ENCODE measurements at regions of chr16 and their contacts with region 1.

Region 1: GRCh38 chr16:85554112-85554813 is 58.9 kb upstream of the GSE1 start:
- DNase-seq: peak in 8 of 9 donors; percentile 28 to 78 (median 52)
- ATAC-seq: peak; percentile 76
- H3K4me3 ChIP-seq: peak overlapping the region; percentile 88
- H3K4me3 Mint-ChIP-seq: peak overlapping the region; percentile 86 to 98 (median 92)
- H3K27ac ChIP-seq: peak overlapping the region; percentile 83
- H3K27ac Mint-ChIP-seq: peak overlapping the region; percentile 72 to 97 (median 89)
- H3K4me1 ChIP-seq: peaks cover 13 to 27% of the 10 kb centered on the region in 2 donors
- H3K4me1 Mint-ChIP-seq: peaks cover 18 to 47% (median 28%) of the 10 kb centered on the region in 7 donors
- H3K27me3 ChIP-seq: no peaks in the 10 kb centered on the region
- H3K27me3 Mint-ChIP-seq: peaks cover 0 to 15% (median 0%) of the 10 kb centered on the region in 5 donors

Region 2: DNA sequence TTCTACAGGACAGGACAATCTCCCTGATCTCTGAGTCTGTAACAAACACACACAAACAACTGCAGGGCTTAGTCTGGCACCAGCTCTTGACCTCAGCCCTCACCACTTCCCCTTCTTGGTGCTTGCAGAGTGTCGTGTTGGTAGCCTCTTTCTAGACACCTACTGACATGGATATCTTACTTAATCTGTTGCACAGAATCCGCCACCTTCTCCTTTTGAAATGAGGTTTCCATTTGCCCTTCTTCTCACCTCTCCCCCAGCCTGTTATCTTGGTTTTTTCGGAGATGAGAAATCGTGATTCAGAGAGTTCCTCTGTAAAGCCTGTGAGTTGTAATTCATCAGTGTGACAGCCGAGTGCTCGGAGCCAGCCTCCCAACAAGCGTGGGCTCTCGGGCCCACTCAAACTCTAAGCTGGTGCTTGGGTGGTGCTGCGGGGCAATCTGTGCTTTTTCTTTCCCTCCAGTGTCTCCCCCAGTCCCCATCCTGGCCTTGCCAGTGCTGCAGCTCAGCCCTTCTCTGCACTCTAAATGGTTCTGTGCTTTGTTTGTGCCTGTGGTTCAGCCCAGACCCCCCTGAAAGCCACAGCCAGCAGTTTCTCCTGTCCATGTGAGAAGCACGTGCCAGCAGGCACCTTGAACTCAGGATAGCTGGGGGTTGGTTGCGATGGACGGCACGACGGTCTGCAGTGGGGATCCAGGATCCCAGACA is 498.6 kb before region 1 on chr16:
- CTCF ChIA-PET with region 1: no interaction called
- POLR2A ChIA-PET with region 1: no interaction called
- intact Hi-C with region 1: loop called in 1 of 2 experiments (anchors 10 kb)
- DNase-seq: peak; percentile 29 to 90 (median 70)
- ATAC-seq: peak; percentile 96
- H3K4me3 ChIP-seq: peak overlapping the region; percentile 19
- H3K4me3 Mint-ChIP-seq: peak overlapping the region; percentile 76 to 90 (median 84)
- H3K27ac ChIP-seq: peak overlapping the region; percentile 72
- H3K27ac Mint-ChIP-seq: peak overlapping the region; percentile 91 to 99 (median 96)
- H3K4me1 ChIP-seq: peaks cover 25 to 37% of the 10 kb centered on the region in 2 donors
- H3K4me1 Mint-ChIP-seq: peaks cover 32 to 58% (median 37%) of the 10 kb centered on the region in 7 donors
- H3K27me3 ChIP-seq: no peaks in the 10 kb centered on the region
- H3K27me3 Mint-ChIP-seq: no peaks in the 10 kb centered on the region

Region 3: GRCh38 chr16:85448557-85449197 is 105.6 kb before region 1 on chr16:
- CTCF ChIA-PET with region 1: interaction called, 3 read pairs
- POLR2A ChIA-PET with region 1: interaction called, 3 read pairs
- intact Hi-C with region 1: loop called in 1 of 2 experiments (anchors 2 kb)
- DNase-seq: peak in 8 of 9 donors; percentile 36 to 76 (median 72)
- ATAC-seq: peak; percentile 82
- H3K4me3 ChIP-seq: peak overlapping the region; percentile 24
- H3K4me3 Mint-ChIP-seq: peak overlapping the region in 9 of 10 donors; percentile 60 to 82 (median 73)
- H3K27ac ChIP-seq: peak overlapping the region; percentile 58
- H3K27ac Mint-ChIP-seq: peak overlapping the region in 8 of 9 donors; percentile 83 to 97 (median 91)
- H3K4me1 ChIP-seq: peaks cover 31 to 57% of the 10 kb centered on the region in 2 donors
- H3K4me1 Mint-ChIP-seq: peaks cover 3 to 73% (median 48%) of the 10 kb centered on the region in 7 donors
- H3K27me3 ChIP-seq: no peaks in the 10 kb centered on the region
- H3K27me3 Mint-ChIP-seq: peaks cover 0 to 2% (median 0%) of the 10 kb centered on the region in 5 donors

Region 4: DNA sequence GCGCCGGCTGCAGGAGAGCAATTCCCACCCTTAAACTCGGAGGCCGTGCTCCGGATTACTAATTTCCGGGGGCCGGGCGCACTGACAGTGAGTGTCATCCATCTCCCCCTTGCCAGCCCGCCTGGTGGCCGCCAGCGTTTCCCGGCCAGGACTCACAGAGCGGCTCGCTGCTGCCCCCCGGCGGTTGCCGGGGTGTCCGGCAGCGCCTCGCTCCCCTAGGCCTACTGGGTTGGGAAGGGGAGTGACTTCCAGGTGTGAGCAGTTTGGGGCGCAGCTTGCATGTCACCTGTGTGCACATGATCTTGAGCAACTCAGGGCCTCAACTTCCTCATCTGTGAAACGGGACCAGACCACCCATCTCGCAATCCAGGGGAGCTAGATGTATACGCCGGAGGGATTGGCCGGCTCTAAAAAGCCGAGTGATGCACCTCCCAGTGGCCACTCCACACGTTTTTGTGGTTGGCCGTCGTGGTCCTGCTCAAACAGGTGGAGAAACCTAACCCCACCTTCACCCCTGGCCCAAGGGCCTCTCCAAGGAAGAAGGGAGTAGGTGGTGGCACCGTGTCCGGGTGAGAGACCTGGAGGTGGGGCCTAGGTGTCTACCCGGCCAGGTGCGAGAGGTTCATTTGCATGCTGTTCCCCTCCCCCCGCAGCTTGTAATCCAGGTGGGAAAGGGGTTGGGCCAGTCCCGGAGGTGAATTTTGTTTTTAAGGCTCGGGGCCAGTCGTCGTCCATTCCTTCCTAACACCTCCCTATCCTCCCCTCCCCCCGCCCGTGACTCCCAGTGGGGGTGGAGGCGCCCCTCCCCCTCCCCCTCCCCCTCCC is 56.5 kb after region 1 on chr16:
- CTCF ChIA-PET with region 1: interaction called, 6 read pairs
- POLR2A ChIA-PET with region 1: interaction called, 5 read pairs
- intact Hi-C with region 1: loop called (anchors 1 kb)
- DNase-seq: peak; percentile 68 to 93 (median 80)
- ATAC-seq: peak; percentile 85
- H3K4me3 ChIP-seq: peak overlapping the region; percentile 66
- H3K4me3 Mint-ChIP-seq: peak overlapping the region; percentile 73 to 86 (median 81)
- H3K27ac ChIP-seq: no peak overlapping the region
- H3K27ac Mint-ChIP-seq: peak overlapping the region in 5 of 9 donors; percentile 17 to 76 (median 76)
- H3K4me1 ChIP-seq: peaks cover 23 to 31% of the 10 kb centered on the region in 2 donors
- H3K4me1 Mint-ChIP-seq: peaks cover 16 to 55% (median 27%) of the 10 kb centered on the region in 7 donors
- H3K27me3 ChIP-seq: peaks cover 0 to 2% of the 10 kb centered on the region in 2 donors
- H3K27me3 Mint-ChIP-seq: peaks cover 0 to 14% (median 0%) of the 10 kb centered on the region in 5 donors

Region 5: DNA sequence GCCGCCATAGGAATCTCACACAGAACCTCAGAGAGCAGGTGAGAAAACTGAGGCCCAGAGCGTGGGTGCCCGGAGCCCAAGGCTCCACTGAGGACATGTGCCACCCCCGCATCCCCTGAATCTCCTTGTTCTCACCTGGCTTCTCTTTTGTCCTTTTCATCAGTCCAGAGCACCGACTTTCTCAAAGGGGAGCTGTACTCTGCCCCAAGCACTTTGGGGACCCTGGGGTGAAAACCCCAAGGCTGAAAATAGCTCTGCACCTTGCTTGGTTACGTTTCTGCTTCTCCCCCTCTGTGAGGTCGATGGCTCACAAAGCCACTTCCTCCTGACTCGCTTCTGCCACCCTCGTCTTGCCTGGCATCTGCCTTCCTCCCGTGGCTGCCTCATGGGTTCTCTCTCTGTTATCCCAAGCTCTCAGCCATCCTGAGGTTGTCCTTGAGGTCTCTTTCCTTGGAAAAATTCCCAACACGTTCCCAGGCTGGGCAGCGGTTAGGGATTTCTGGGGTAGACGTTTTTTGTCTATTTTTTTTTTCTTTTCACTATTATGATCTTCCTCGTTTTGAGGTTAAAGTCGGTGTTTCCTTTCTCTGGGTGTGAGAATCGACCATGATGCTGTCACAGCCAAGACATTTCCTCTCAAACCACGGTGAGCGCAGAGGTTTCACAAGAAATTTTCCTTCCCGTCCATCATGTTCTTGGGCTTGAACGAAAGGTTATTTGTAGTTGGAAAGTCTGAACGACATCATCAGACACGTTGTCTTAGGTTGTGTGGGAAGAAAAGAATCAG is 381.9 kb after region 1 on chr16:
- CTCF ChIA-PET with region 1: no interaction called
- POLR2A ChIA-PET with region 1: no interaction called
- intact Hi-C with region 1: loop called in 1 of 2 experiments (anchors 10 kb)
- DNase-seq: peak; percentile 40 to 80 (median 74)
- ATAC-seq: peak; percentile 91
- H3K4me3 ChIP-seq: peak overlapping the region; percentile 52
- H3K4me3 Mint-ChIP-seq: peak overlapping the region; percentile 72 to 88 (median 82)
- H3K27ac ChIP-seq: peak overlapping the region; percentile 68
- H3K27ac Mint-ChIP-seq: peak overlapping the region; percentile 91 to 98 (median 95)
- H3K4me1 ChIP-seq: peaks cover 25 to 29% of the 10 kb centered on the region in 2 donors
- H3K4me1 Mint-ChIP-seq: peaks cover 34 to 54% (median 40%) of the 10 kb centered on the region in 7 donors
- H3K27me3 ChIP-seq: no peaks in the 10 kb centered on the region
- H3K27me3 Mint-ChIP-seq: peaks cover 0 to 3% (median 0%) of the 10 kb centered on the region in 5 donors